MCF 10A (cell line): ENCODE measurements at regions of chr5 and their contacts with region 1.

Region 1: GRCh38 chr5:140042643-140043500 is at the start of gene NRG2:
- DNase-seq: peak; percentile 63
- H3K4me3 Mint-ChIP-seq: peak within 1 kb of the TSS; percentile 69
- H3K27ac Mint-ChIP-seq: no peak within 1 kb of the TSS
- H3K4me1 Mint-ChIP-seq: peaks cover 32% of the 10 kb centered on the region
- H3K27me3 Mint-ChIP-seq: peaks cover 23% of the 10 kb centered on the region
- CTCF ChIP-seq: peak; percentile 57
- total RNA-seq, gene NRG2: 0.23 TPM in 1 of 2 replicates, not detected in the other

Region 2: GRCh38 chr5:140054086-140054689 is 11.3 kb after region 1 on chr5:
- CTCF ChIA-PET with region 1: interaction called, 15 read pairs
- POLR2A ChIA-PET with region 1: interaction called, 12 read pairs
- intact Hi-C with region 1: no loop called
- DNase-seq: peak; percentile 77
- H3K4me3 Mint-ChIP-seq: no peak overlapping the region
- H3K27ac Mint-ChIP-seq: no peak overlapping the region
- H3K4me1 Mint-ChIP-seq: no peaks in the 10 kb centered on the region
- H3K27me3 Mint-ChIP-seq: no peaks in the 10 kb centered on the region
- CTCF ChIP-seq: no peak